GM10248 (cell line): ENCODE measurements at regions of chr14 and their contacts with region 1.

Region 1: GRCh38 chr14:70013269-70013873 is 134.2 kb downstream of the SMOC1 start:
- DNase-seq: peak; percentile 54
- CTCF ChIP-seq: peak; percentile 65

Region 2: DNA sequence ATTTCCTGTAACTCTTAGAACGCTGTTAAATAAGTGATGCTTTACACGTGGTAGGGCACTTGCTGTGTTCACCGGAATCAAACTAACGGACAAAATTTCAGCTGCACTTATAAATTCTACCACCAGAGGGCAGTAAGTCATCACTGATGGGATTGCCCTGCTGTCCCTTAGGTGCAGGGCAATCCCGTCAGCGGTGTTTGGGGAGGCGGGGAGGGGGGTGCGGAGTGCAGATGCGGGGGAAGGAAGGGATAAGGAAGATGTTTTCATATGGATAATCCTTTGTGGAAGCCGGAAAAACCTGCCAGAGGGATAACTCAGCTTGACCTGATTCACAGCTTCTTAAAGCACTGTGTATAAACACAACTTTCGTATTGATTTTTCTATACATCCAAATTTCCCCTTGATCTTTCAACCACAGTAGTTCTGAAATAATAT is 194.6 kb before region 1 on chr14:
- CTCF ChIA-PET with region 1: interaction called, 33 read pairs
- POLR2A ChIA-PET with region 1: no interaction called
- DNase-seq: peak; percentile 74
- CTCF ChIP-seq: peak; percentile 87

Region 3: DNA sequence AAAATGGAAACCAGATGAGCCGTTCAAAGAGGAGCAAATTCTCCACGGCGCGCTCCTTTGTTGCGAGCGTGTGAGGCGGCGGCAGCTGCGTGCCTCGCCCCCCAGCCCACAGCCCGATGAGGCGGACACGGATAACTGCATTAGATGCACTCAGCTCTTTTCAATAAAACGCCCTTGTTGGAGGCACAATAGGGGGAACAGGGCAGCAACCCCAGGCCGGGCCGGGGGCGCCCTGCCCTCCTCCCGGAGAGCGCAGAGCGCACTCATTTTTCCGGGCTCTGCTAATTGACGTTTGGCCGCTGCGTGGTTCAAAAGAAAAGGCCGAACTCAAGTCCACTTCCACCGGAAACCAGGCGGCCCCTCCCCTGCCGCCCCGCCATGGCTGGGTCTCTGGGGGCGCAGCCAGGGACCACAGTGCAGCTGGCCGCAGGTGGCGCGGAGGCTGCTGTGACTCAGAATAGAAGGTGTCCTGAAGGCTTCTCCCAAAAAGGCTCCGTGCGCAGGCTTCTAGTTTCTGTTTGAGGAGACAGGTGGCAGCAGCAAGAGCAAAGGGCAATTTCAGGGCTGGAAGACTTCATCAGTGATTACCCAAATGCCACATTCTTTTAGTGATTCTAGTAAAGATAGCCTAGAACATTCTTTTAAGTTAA is 163.2 kb before region 1 on chr14:
- CTCF ChIA-PET with region 1: no interaction called
- POLR2A ChIA-PET with region 1: no interaction called
- DNase-seq: no peak
- CTCF ChIP-seq: no peak

Region 4: DNA sequence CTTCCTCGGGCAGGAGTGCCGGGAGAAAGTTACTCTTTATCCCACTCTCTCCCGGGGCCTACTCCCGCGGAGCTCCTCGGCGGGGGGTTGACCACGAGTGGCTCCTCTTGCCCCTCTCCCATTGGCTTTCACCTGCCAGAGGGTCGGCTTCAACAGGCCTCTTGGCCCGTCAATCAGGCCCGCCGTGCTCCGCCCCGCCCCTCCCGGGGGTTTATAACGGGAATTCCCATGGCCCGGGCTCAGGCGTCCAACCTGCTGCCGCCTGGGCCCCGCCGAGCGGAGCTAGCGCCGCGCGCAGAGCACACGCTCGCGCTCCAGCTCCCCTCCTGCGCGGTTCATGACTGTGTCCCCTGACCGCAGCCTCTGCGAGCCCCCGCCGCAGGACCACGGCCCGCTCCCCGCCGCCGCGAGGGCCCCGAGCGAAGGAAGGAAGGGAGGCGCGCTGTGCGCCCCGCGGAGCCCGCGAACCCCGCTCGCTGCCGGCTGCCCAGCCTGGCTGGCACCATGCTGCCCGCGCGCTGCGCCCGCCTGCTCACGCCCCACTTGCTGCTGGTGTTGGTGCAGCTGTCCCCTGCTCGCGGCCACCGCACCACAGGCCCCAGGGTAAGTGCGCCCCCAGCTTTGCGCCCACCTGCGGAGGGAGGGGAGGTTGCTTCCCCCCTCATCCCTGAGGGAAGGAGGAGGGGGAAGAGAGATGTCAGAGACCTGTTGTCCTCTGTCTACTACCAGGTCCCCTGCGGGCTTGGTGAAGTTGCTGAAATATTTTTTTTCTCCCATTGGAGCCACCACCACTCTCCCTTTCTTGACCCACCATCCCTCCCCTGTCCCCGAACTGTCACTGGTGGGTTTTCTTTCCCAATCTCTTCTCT is 134.0 kb before region 1 on chr14 and contains the start of gene SMOC1:
- CTCF ChIA-PET with region 1: interaction called, 19 read pairs
- POLR2A ChIA-PET with region 1: no interaction called
- DNase-seq: peak; percentile 63
- CTCF ChIP-seq: no peak

Region 5: DNA sequence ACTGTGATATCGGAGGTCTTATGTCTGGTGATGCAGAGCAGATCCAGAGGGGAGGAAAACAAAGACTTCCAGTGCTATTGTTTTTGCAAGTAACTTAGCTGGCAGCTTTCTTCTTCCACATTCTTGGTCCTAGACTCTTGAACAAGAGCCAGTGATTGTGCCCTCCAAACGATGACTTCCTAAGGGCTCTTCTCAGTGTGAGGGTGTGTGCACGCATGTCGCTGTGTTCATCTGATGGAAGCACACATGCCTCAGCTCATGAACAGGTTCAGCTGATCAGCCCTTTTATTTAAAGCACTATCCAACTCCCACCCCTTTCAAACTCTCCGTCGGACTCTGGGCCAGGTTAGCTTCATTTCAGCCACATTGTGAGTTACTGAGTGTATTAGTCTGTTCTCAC is 74.6 kb before region 1 on chr14:
- CTCF ChIA-PET with region 1: no interaction called
- POLR2A ChIA-PET with region 1: no interaction called
- DNase-seq: no peak
- CTCF ChIP-seq: no peak

Region 6: DNA sequence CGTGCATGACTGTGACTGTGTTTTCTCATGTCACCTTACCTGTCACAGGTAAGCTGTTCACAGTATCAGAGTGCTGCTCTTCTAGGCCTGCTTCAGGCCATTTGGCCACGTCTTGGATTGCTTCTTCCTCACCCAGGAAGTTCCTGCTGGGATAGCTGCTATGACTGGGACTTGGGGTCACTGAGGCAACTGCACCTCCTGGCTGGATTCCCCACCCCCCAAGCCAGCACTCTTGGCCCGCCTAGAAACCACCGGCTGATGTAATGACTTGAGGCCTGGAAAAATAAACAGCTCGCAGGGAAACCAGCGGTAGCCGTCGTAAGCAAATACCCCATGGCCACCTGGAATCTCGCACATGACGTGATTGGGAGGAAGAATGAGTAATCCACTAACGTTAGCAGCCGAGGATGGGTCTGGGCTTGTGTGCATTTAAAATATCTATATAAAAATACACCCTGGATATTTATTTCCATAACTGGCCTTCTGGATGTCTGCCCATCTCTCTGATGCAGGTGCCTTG is 14.2 kb before region 1 on chr14:
- CTCF ChIA-PET with region 1: interaction called, 26 read pairs
- POLR2A ChIA-PET with region 1: no interaction called
- DNase-seq: no peak
- CTCF ChIP-seq: no peak